Right cardiac atrium (tissue), 5 donors: ENCODE measurements at regions of chr4 and their contacts with region 1.

Region 1: GRCh38 chr4:98341309-98341708 is 80.1 kb downstream of the RAP1GDS1 start:
- DNase-seq: no peak
- ATAC-seq: no peak
- H3K4me3 ChIP-seq: no peak overlapping the region
- H3K27ac ChIP-seq: no peak overlapping the region
- H3K4me1 ChIP-seq: no peaks in the 10 kb centered on the region
- H3K27me3 ChIP-seq: no peaks in the 10 kb centered on the region

Region 2: GRCh38 chr4:98260579-98261290 is 80.6 kb before region 1 on chr4:
- intact Hi-C with region 1: no loop called
- DNase-seq: peak; percentile 97 to 99 (median 98)
- ATAC-seq: peak; percentile 99
- H3K4me3 ChIP-seq: peak overlapping the region; percentile 93
- H3K27ac ChIP-seq: peak overlapping the region; percentile 81
- H3K4me1 ChIP-seq: peaks cover 3% of the 10 kb centered on the region
- H3K27me3 ChIP-seq: no peaks in the 10 kb centered on the region

Region 3: GRCh38 chr4:98381306-98381705 is 40.0 kb after region 1 on chr4:
- intact Hi-C with region 1: loop called in 1 of 4 experiments (anchors 2 kb)
- DNase-seq: no peak
- ATAC-seq: no peak
- H3K4me3 ChIP-seq: no peak overlapping the region
- H3K27ac ChIP-seq: no peak overlapping the region
- H3K4me1 ChIP-seq: no peaks in the 10 kb centered on the region
- H3K27me3 ChIP-seq: no peaks in the 10 kb centered on the region

Region 4: GRCh38 chr4:98474408-98474844 is 133.1 kb after region 1 on chr4:
- intact Hi-C with region 1: no loop called
- DNase-seq: no peak
- ATAC-seq: no peak
- H3K4me3 ChIP-seq: no peak overlapping the region
- H3K27ac ChIP-seq: no peak overlapping the region
- H3K4me1 ChIP-seq: no peaks in the 10 kb centered on the region
- H3K27me3 ChIP-seq: no peaks in the 10 kb centered on the region